ENCODE measurements at regions of chr6 and their contacts with region 1.

Region 1: DNA sequence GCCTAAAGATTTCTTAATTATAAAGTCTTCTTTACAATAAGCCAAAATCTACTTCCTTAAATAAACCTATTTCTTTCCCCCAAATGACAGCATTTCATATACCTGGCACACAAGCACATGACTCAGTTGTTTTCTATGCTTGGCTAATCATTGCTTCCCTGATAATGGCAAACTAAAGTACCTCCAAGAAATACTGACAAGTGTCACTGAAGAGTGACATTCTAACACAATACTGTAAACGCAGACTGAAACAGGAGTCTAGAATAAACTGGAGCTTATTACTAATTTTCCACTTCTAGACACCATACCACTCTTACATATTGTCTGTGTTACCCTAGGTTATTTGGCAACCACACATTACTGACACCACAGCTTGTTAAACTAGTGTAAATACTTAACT is 14.3 kb downstream of the SYNCRIP start:
- DNase-seq: no peak
- ATAC-seq: no peak
- H3K4me3 ChIP-seq: no peak overlapping the region
- H3K4me3 Mint-ChIP-seq: no peak overlapping the region
- H3K27ac ChIP-seq: no peak overlapping the region
- H3K27ac Mint-ChIP-seq: no peak overlapping the region
- H3K4me1 ChIP-seq: no peaks in the 10 kb centered on the region
- H3K4me1 Mint-ChIP-seq: peaks cover 27% of the 10 kb centered on the region
- H3K27me3 ChIP-seq: no peaks in the 10 kb centered on the region
- H3K27me3 Mint-ChIP-seq: no peaks in the 10 kb centered on the region
- CTCF ChIP-seq: no peak

Region 2: DNA sequence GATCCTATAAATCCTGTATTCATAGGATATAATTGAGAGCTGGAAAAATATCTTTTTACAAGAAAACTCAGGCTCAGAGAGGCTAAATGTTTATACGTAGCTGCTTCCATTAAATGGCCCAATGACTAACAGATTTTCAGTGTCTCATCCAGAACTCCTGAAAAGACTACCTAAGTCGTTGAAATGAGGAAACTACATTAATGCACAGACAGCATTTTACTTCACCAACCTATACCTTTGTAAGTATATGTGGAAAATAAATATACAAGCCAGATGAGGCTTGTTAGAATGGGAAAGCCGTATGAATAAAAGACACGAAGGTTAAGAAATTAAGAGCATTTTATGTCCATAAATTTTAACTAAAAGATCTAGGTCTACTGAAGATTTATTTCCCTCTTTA is 26.3 kb before region 1 on chr6:
- CTCF ChIA-PET with region 1: no interaction called
- POLR2A ChIA-PET with region 1: interaction called, 11 read pairs
- intact Hi-C with region 1: no loop called
- DNase-seq: no peak
- ATAC-seq: no peak
- H3K4me3 ChIP-seq: no peak overlapping the region
- H3K4me3 Mint-ChIP-seq: no peak overlapping the region
- H3K27ac ChIP-seq: no peak overlapping the region
- H3K27ac Mint-ChIP-seq: no peak overlapping the region
- H3K4me1 ChIP-seq: no peaks in the 10 kb centered on the region
- H3K4me1 Mint-ChIP-seq: no peaks in the 10 kb centered on the region
- H3K27me3 ChIP-seq: no peaks in the 10 kb centered on the region
- H3K27me3 Mint-ChIP-seq: no peaks in the 10 kb centered on the region
- CTCF ChIP-seq: no peak

Measured in B cell (primary cell).